Activated T-helper 2 cell treated with anti-CD3 and anti-CD28 coated beads, Interferon-gamma antibody, Interleukin-2, Interleukin-4, amounts not matched to agents 10 μg/mL and 5 μg/mL and 100 μg/mL, durations not matched to agents 14 hours and 24 hours and 36 hours (primary cell): ENCODE measurements at regions of chr3 and their contacts with region 1.

Region 1: GRCh38 chr3:66822186-66823008 is 175.7 kb upstream of the KBTBD8 start:
- DNase-seq: peak; percentile 33
- H3K4me3 Mint-ChIP-seq: no peak overlapping the region
- H3K27ac Mint-ChIP-seq: no peak overlapping the region
- H3K4me1 Mint-ChIP-seq: no peaks in the 10 kb centered on the region
- H3K27me3 Mint-ChIP-seq: peaks cover 20% of the 10 kb centered on the region

Region 2: GRCh38 chr3:66253790-66254620 is 568.4 kb before region 1 on chr3:
- intact Hi-C with region 1: loop called (anchors 2 kb)
- DNase-seq: no peak
- H3K4me3 Mint-ChIP-seq: no peak overlapping the region
- H3K27ac Mint-ChIP-seq: no peak overlapping the region
- H3K4me1 Mint-ChIP-seq: peaks cover 4% of the 10 kb centered on the region
- H3K27me3 Mint-ChIP-seq: no peaks in the 10 kb centered on the region